ENCODE measurements at regions of chr6 and their contacts with region 1.

Region 1: DNA sequence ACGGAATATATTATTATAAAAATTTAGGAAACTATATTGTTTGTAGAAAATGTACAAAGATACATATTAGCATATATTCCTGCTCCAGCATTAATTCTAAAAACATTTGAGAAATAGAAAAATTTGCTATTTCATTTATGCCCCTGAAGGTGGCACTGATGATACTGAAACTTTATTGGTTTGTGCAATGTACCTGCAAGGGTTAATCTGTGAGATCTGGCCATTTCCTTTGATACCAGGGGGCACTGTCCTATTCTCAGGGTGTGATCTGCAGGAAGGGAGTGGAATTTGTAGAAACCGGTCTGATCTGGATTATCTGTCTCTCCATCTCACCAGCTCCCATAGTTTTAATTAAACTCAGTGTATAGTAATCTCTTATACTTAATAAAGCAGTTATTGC is 625.1 kb upstream of the IMPG1 start:
- DNase-seq: no peak
- ATAC-seq: no peak

Region 2: GRCh38 chr6:76250666-76251065 is 446.9 kb before region 1 on chr6:
- intact Hi-C with region 1: no loop called
- DNase-seq: no peak
- ATAC-seq: no peak

Region 3: DNA sequence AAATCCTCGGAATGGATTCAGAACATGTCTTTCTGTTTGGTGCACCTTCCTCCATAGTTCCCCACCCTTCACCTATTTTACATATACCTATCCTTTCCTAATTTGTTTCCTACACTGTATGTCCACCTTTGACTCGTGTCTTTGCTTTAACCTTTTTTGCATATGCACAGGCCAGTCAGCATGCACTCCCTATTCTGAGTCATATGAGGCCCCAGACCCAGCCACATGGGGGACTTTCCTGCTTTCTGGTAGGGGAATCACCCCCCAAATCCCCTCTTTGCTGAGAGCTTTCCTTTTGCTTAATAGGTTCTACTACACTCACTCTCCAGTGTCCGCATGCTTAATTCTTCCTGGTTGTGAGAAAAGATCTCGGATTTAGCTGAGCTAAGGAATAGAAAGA is 231.3 kb before region 1 on chr6:
- intact Hi-C with region 1: no loop called
- DNase-seq: no peak
- ATAC-seq: no peak

Region 4: GRCh38 chr6:76565932-76566331 is 131.7 kb before region 1 on chr6:
- intact Hi-C with region 1: no loop called
- DNase-seq: no peak
- ATAC-seq: no peak

Region 5: DNA sequence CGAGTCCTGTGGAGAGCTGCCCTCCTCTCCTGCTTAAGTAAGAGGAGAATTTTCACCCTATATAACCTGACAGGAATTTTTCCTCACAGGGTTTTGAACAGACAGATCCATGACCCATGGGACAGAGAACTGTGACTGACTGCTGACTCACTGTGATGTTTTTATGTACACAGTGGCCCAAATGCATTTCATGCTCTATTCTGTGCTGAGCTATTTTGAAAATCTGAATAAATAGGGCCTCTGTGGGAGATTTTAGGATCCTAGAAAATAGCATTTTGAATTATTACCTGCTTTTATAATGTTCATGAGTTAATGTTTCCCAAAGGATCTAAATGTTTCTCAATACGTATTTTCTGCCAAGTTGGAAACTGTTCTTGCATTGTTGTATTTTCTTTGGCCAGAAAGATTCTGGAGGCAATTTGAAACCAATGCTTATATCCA is 188.3 kb after region 1 on chr6:
- intact Hi-C with region 1: loop called (anchors 10 kb)
- DNase-seq: no peak
- ATAC-seq: no peak

Measured in Right ventricle myocardium superior (tissue), 1 donor.